Activated CD8-positive, alpha-beta T cell treated with anti-CD3 and anti-CD28 coated beads for 36 hours (primary cell): ENCODE measurements at regions of chr2 and their contacts with region 1.

Region 1: GRCh38 chr2:45778720-45779171 is 127.3 kb downstream of the PRKCE start:
- DNase-seq: peak; percentile 77
- ATAC-seq: peak; percentile 88
- H3K4me3 Mint-ChIP-seq: no peak overlapping the region
- H3K27ac Mint-ChIP-seq: no peak overlapping the region
- H3K4me1 Mint-ChIP-seq: peaks cover 3% of the 10 kb centered on the region
- H3K27me3 Mint-ChIP-seq: no peaks in the 10 kb centered on the region
- CTCF ChIP-seq: peak; percentile 93

Region 2: GRCh38 chr2:45166229-45166890 is 612.4 kb before region 1 on chr2:
- CTCF ChIA-PET with region 1: no interaction called
- POLR2A ChIA-PET with region 1: no interaction called
- intact Hi-C with region 1: no loop called
- DNase-seq: no peak
- ATAC-seq: no peak
- H3K4me3 Mint-ChIP-seq: no peak overlapping the region
- H3K27ac Mint-ChIP-seq: no peak overlapping the region
- H3K4me1 Mint-ChIP-seq: peaks cover 2% of the 10 kb centered on the region
- H3K27me3 Mint-ChIP-seq: peaks cover 54% of the 10 kb centered on the region
- CTCF ChIP-seq: no peak

Region 3: GRCh38 chr2:45483997-45484396 is 294.7 kb before region 1 on chr2:
- CTCF ChIA-PET with region 1: no interaction called
- POLR2A ChIA-PET with region 1: no interaction called
- intact Hi-C with region 1: no loop called
- DNase-seq: no peak
- ATAC-seq: no peak
- H3K4me3 Mint-ChIP-seq: no peak overlapping the region
- H3K27ac Mint-ChIP-seq: no peak overlapping the region
- H3K4me1 Mint-ChIP-seq: no peaks in the 10 kb centered on the region
- H3K27me3 Mint-ChIP-seq: no peaks in the 10 kb centered on the region
- CTCF ChIP-seq: peak; percentile 37

Region 4: GRCh38 chr2:45643543-45644542 is 134.9 kb before region 1 on chr2:
- CTCF ChIA-PET with region 1: interaction called, 51 read pairs
- POLR2A ChIA-PET with region 1: no interaction called
- intact Hi-C with region 1: loop called (anchors 1 kb)
- DNase-seq: peak; percentile 68
- ATAC-seq: peak; percentile 98
- H3K4me3 Mint-ChIP-seq: peak overlapping the region; percentile 31
- H3K27ac Mint-ChIP-seq: no peak overlapping the region
- H3K4me1 Mint-ChIP-seq: peaks cover 4% of the 10 kb centered on the region
- H3K27me3 Mint-ChIP-seq: peaks cover 19% of the 10 kb centered on the region
- CTCF ChIP-seq: peak; percentile 86

Region 5: DNA sequence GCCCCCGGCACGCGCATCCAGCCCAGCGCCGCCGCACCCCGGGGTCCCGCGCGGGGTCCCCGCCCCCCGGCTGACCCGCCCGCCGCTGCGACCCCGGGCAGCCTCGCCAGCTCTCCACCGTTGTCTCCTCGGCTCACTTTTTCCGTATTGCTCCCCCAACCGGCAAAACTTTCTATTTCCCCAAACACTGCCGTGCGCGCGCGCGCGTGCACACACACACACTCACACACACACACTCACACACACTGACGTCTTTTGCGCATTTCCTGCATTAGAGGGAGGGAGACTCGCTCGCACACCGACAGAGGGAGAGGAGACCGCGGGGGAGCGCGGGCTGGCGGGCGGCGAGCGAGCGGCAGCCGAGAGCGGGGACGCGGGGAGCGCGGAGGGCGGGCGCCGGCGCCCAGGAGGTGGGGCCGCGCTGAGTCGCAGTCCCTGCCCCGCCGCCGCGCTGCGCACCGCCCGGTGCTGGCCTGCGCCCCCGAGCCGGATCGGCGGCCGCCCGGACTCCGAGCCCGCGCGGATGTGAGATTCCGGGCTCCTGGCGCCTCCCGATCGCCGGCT is 127.8 kb before region 1 on chr2:
- CTCF ChIA-PET with region 1: interaction called, 51 read pairs
- POLR2A ChIA-PET with region 1: no interaction called
- intact Hi-C with region 1: no loop called
- DNase-seq: peak; percentile 95
- ATAC-seq: peak; percentile 87
- H3K4me3 Mint-ChIP-seq: peak overlapping the region; percentile 84
- H3K27ac Mint-ChIP-seq: peak overlapping the region; percentile 90
- H3K4me1 Mint-ChIP-seq: peaks cover 17% of the 10 kb centered on the region
- H3K27me3 Mint-ChIP-seq: peaks cover 5% of the 10 kb centered on the region
- CTCF ChIP-seq: peak; percentile 14

Region 6: DNA sequence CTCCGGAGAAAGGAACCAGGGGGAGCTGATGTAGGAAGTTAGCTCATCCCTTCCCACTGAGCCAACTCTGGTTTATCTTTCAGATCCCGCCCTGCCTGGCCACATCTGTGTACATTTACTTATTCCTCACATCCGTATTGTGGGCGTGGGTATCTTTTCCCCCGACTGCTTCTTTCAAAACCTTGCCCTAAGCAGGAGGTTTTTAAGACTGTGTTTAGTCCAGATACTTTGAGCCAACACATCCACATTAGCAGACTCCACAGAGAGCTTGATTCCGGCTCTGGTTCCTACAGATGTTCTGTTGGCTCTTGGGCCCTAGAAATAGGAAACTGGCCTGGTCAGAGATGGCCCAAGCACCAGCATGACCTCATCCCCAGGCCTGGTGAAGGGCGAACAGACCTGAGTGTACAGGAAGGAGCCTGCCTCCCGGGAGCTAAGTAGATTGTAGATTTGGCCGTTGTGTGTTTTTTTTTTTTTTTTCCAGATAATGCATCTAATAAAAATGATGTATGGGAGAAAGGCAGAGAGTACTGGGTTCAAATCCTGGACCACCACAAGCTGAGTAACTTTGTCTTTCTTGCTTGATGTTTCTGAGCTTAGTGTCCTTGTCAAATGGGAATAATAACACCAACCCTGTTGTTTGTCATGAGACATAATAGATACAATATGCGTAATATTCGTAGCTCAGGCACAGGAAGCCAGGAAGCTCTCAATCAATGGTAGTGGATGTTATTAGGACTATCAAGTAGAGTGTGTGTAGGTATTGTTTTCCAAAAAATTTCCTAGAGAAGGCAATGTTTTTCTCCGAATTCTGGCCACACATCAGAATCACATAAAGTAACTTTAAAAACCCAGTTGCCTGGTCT is 35.0 kb before region 1 on chr2:
- CTCF ChIA-PET with region 1: no interaction called
- POLR2A ChIA-PET with region 1: no interaction called
- intact Hi-C with region 1: no loop called
- DNase-seq: no peak
- ATAC-seq: no peak
- H3K4me3 Mint-ChIP-seq: no peak overlapping the region
- H3K27ac Mint-ChIP-seq: no peak overlapping the region
- H3K4me1 Mint-ChIP-seq: peaks cover 2% of the 10 kb centered on the region
- H3K27me3 Mint-ChIP-seq: no peaks in the 10 kb centered on the region
- CTCF ChIP-seq: no peak

Region 7: GRCh38 chr2:45793305-45793962 is 14.7 kb after region 1 on chr2:
- CTCF ChIA-PET with region 1: interaction called, 46 read pairs
- POLR2A ChIA-PET with region 1: no interaction called
- intact Hi-C with region 1: no loop called
- DNase-seq: no peak
- ATAC-seq: no peak
- H3K4me3 Mint-ChIP-seq: no peak overlapping the region
- H3K27ac Mint-ChIP-seq: no peak overlapping the region
- H3K4me1 Mint-ChIP-seq: no peaks in the 10 kb centered on the region
- H3K27me3 Mint-ChIP-seq: no peaks in the 10 kb centered on the region
- CTCF ChIP-seq: no peak

Region 8: DNA sequence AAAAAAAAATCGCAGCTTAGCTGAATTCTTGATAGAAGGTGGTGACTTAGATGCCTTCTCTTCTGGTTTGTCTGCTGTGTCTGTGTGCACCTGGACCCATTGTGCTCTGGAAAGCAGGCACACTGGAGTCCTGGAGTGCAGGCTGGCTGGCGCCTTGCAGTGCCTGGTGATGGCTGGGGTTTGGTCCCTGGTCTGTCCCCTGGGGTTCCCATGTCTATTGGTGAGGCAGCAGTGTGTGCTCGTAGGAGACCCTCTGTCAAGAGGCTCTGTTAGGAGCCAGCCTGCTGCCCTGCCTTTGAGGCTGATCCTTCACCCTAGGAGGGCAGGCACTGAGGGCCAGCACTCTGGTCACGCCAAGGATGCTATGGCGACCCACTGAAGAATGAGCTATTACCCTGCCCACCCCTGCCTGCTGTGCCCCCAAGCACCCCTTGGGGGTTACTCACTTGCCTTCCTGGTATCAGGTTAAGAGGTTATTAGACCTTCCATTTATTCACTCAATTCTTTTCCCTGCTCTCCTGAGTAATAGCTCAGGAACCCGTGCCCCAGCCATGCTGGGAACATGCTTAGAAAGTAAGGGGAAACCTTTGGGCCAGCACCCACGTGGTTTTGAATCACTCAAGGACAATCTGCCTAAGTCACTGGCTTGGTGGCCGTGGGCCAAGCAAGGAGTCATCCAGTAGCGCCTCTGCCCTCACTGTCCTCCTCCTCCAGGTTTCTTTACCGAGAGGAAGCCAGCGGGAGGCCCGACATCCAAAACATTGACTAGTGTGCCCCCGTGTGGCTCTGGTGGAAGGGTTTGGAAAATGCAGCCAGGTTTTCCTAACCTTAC is 157.3 kb after region 1 on chr2:
- CTCF ChIA-PET with region 1: interaction called, 19 read pairs
- POLR2A ChIA-PET with region 1: no interaction called
- intact Hi-C with region 1: loop called (anchors 10 kb)
- DNase-seq: peak; percentile 71
- ATAC-seq: peak; percentile 87
- H3K4me3 Mint-ChIP-seq: no peak overlapping the region
- H3K27ac Mint-ChIP-seq: no peak overlapping the region
- H3K4me1 Mint-ChIP-seq: peaks cover 3% of the 10 kb centered on the region
- H3K27me3 Mint-ChIP-seq: no peaks in the 10 kb centered on the region
- CTCF ChIP-seq: peak; percentile 51